Activated B cell treated with CpG ODN at 0.5 μM for 24 hours (primary cell): ENCODE measurements at regions of chr9 and their contacts with region 1.

Region 1: DNA sequence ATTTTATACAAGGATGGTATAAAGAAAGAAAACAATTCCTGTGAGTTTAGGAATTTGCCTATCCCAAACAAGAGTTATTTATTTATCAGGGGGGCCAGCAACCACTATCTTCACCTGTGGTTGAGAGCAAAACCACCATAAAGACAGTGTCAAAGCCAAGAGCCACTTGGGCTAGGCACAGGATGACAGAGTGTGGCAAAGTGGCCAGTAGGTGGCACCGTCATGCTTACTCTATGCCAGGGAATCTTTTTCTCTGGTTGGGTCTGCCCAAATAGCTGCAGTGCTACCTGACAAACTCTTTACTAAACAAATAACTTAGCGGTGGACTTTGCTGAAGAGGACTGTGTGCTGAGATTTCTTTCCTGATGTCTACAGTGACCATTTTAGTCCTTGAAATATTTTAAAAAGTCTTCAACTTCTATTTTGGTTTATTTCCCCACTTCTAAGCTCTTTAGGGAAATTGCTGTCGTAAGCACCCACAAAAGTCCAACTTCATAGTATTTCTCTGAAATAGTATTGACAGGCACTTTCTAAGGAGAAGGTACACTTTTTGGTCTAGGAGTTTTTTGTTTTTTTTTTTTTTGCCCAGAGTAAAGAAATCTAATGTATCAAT is 285.0 kb downstream of the RFX3 start:
- DNase-seq: peak; percentile 35
- ATAC-seq: peak; percentile 90
- H3K4me3 Mint-ChIP-seq: no peak overlapping the region
- H3K27ac Mint-ChIP-seq: no peak overlapping the region
- H3K4me1 Mint-ChIP-seq: peaks cover 4% of the 10 kb centered on the region
- H3K27me3 Mint-ChIP-seq: no peaks in the 10 kb centered on the region
- CTCF ChIP-seq: peak; percentile 65

Region 2: GRCh38 chr9:2857564-2858198 is 383.1 kb before region 1 on chr9:
- CTCF ChIA-PET with region 1: no interaction called
- POLR2A ChIA-PET with region 1: no interaction called
- intact Hi-C with region 1: loop called (anchors 1 kb)
- DNase-seq: no peak
- ATAC-seq: peak; percentile 88
- H3K4me3 Mint-ChIP-seq: no peak overlapping the region
- H3K27ac Mint-ChIP-seq: no peak overlapping the region
- H3K4me1 Mint-ChIP-seq: peaks cover 4% of the 10 kb centered on the region
- H3K27me3 Mint-ChIP-seq: peaks cover 34% of the 10 kb centered on the region
- CTCF ChIP-seq: no peak

Region 3: DNA sequence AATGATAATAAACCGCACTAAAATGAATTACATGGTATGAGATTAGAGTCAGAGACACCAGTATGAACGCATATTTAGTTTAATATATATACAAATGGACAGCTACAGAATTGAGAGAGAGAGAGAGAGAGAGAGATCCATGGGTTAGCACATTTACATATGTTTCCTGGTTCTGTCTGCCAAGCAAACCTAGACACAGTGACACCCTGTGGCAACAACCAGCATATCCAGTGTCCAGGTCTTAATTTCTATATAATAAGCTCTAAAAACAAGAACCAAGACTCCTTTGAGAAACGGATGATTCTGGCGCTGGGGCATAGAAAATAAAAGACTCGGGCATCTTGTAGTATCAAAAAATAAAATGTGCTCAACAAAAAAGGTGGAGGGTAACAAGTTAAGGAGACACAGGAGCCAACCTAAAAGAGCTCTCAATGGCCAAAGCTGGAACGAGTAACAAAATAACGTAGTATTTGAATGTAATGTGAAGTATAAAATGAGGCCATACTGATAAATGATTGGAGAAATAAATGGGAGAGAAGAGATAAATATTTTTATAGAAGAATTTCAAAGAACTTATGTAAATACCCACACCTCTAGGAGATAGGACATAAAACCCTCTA is 200.5 kb after region 1 on chr9:
- CTCF ChIA-PET with region 1: interaction called, 136 read pairs
- POLR2A ChIA-PET with region 1: interaction called, 7 read pairs
- intact Hi-C with region 1: loop called (anchors 1 kb)
- DNase-seq: no peak
- ATAC-seq: peak; percentile 92
- H3K4me3 Mint-ChIP-seq: no peak overlapping the region
- H3K27ac Mint-ChIP-seq: no peak overlapping the region
- H3K4me1 Mint-ChIP-seq: peaks cover 11% of the 10 kb centered on the region
- H3K27me3 Mint-ChIP-seq: no peaks in the 10 kb centered on the region
- CTCF ChIP-seq: no peak

Region 4: GRCh38 chr9:4117835-4118610 is 877.3 kb after region 1 on chr9:
- CTCF ChIA-PET with region 1: interaction called, 8 read pairs
- POLR2A ChIA-PET with region 1: no interaction called
- intact Hi-C with region 1: loop called (anchors 1 kb)
- DNase-seq: peak; percentile 42
- ATAC-seq: no peak
- H3K4me3 Mint-ChIP-seq: no peak overlapping the region
- H3K27ac Mint-ChIP-seq: no peak overlapping the region
- H3K4me1 Mint-ChIP-seq: no peaks in the 10 kb centered on the region
- H3K27me3 Mint-ChIP-seq: peaks cover 2% of the 10 kb centered on the region
- CTCF ChIP-seq: no peak

Region 5: GRCh38 chr9:4366591-4367330 is 1126.0 kb after region 1 on chr9:
- CTCF ChIA-PET with region 1: no interaction called
- POLR2A ChIA-PET with region 1: no interaction called
- intact Hi-C with region 1: loop called (anchors 1 kb)
- DNase-seq: no peak
- ATAC-seq: no peak
- H3K4me3 Mint-ChIP-seq: no peak overlapping the region
- H3K27ac Mint-ChIP-seq: no peak overlapping the region
- H3K4me1 Mint-ChIP-seq: no peaks in the 10 kb centered on the region
- H3K27me3 Mint-ChIP-seq: peaks cover 10% of the 10 kb centered on the region
- CTCF ChIP-seq: peak; percentile 31